ENCODE measurements at regions of chr3 and their contacts with region 1.

Region 1: GRCh38 chr3:133874761-133875438 is 20.8 kb downstream of the RAB6B start:
- DNase-seq: no peak
- ATAC-seq: no peak
- H3K4me3 ChIP-seq: no peak overlapping the region
- H3K4me3 Mint-ChIP-seq: no peak overlapping the region
- H3K27ac ChIP-seq: no peak overlapping the region
- H3K27ac Mint-ChIP-seq: no peak overlapping the region
- H3K4me1 ChIP-seq: no peaks in the 10 kb centered on the region
- H3K4me1 Mint-ChIP-seq: no peaks in the 10 kb centered on the region
- H3K27me3 ChIP-seq: no peaks in the 10 kb centered on the region
- H3K27me3 Mint-ChIP-seq: peaks cover 4 to 32% (median 5%) of the 10 kb centered on the region in 5 donors

Region 2: GRCh38 chr3:132135628-132136333 is 1739.1 kb before region 1 on chr3:
- CTCF ChIA-PET with region 1: no interaction called
- POLR2A ChIA-PET with region 1: no interaction called
- intact Hi-C with region 1: no loop called
- DNase-seq: no peak
- ATAC-seq: no peak
- H3K4me3 ChIP-seq: no peak overlapping the region
- H3K4me3 Mint-ChIP-seq: no peak overlapping the region
- H3K27ac ChIP-seq: no peak overlapping the region
- H3K27ac Mint-ChIP-seq: no peak overlapping the region
- H3K4me1 ChIP-seq: no peaks in the 10 kb centered on the region
- H3K4me1 Mint-ChIP-seq: no peaks in the 10 kb centered on the region
- H3K27me3 ChIP-seq: no peaks in the 10 kb centered on the region
- H3K27me3 Mint-ChIP-seq: peaks cover 0 to 28% (median 16%) of the 10 kb centered on the region in 5 donors

Region 3: GRCh38 chr3:133828581-133829309 is 46.2 kb before region 1 on chr3:
- CTCF ChIA-PET with region 1: no interaction called
- POLR2A ChIA-PET with region 1: no interaction called
- intact Hi-C with region 1: loop called in 1 of 2 experiments (anchors 1 kb)
- DNase-seq: no peak
- ATAC-seq: no peak
- H3K4me3 ChIP-seq: no peak overlapping the region
- H3K4me3 Mint-ChIP-seq: no peak overlapping the region
- H3K27ac ChIP-seq: no peak overlapping the region
- H3K27ac Mint-ChIP-seq: peak overlapping the region in 2 of 9 donors; percentile 28 to 36
- H3K4me1 ChIP-seq: no peaks in the 10 kb centered on the region
- H3K4me1 Mint-ChIP-seq: no peaks in the 10 kb centered on the region
- H3K27me3 ChIP-seq: no peaks in the 10 kb centered on the region
- H3K27me3 Mint-ChIP-seq: peaks cover 0 to 4% (median 0%) of the 10 kb centered on the region in 5 donors

Region 4: DNA sequence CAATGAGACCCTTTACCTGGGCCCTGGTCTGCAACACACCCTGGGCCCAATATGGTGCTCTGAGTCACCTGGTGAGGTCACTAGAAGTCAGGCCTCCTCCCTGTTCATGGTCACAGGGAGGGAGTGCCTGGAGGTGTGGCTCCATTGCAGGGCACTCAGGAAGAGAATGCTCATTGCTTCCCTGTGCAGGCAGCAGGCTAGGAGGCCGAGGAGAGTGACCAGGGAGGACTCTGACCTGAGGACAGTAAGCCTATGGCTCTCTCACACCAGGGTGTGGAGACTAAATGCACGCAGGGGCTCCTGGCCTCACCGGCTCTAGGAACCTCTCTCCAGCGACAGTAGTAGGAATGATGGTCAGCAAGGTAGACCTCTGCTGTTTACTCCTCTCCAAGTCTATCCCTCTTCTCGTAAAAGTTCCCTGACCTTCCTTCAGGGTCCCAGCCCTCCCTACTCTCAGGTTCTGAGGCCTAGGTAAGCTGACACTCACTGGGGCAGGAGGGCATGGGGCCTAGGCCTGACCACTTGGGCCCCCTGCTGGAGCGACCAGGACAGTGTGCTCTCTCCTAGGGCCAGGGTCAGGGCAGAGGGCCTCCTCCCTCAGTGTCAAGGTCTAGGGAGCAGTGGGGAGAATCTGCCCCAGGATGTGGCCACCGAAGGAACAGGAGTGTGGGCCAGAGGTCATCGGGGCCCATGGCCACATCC is 164.4 kb after region 1 on chr3:
- CTCF ChIA-PET with region 1: no interaction called
- POLR2A ChIA-PET with region 1: no interaction called
- intact Hi-C with region 1: no loop called
- DNase-seq: no peak
- ATAC-seq: no peak
- H3K4me3 ChIP-seq: no peak overlapping the region
- H3K4me3 Mint-ChIP-seq: no peak overlapping the region
- H3K27ac ChIP-seq: no peak overlapping the region
- H3K27ac Mint-ChIP-seq: no peak overlapping the region
- H3K4me1 ChIP-seq: no peaks in the 10 kb centered on the region
- H3K4me1 Mint-ChIP-seq: no peaks in the 10 kb centered on the region
- H3K27me3 ChIP-seq: no peaks in the 10 kb centered on the region
- H3K27me3 Mint-ChIP-seq: peaks cover 0 to 21% (median 4%) of the 10 kb centered on the region in 5 donors